SK-N-SH (cell line): ENCODE measurements at regions of chr20 and their contacts with region 1.

Region 1: DNA sequence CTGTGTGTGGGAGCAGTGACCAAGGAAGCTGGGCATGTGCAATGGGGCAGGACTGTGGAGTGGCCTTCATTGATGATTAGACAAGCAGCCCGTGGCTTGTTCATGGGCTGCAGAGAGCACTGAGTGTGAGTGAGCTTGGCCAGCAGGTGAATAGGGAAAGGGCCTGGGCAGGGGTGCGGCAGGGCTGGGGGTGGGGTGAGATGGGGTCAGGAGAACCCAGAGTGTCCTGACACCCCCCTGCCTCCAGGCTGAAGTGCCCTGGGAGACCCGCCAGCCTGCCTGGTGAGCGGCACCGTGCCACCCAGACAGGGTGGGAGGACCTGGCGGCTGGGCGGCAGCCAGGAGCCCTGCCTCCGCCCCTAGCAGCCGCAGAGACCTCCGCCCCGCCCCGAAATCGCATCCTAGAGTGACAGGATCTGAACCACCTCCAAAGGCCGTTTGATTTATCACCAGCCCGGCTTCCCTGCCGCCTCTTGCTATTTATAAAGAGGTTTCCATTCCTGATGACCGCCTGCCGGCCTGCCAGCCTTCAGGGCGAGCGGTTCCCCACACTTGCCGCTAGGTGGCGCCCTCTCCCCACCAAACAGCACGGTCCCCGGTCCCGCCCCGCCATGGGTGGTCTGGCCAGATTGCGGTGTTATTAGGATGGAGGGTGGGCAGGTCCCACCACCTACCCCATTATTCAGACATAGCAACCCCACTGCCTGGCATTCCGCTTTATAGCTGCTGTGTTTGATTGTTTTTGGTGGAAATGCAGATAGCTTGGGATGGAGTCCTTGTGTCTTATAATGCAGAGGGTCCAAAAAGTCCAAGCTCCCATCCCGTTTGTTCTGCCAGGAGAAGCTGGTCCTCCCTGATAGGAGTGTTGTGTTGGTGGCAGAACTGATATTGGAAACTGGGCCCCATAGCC is 3.5 kb downstream of the MYLK2 start:
- DNase-seq: peak; percentile 94
- H3K4me3 ChIP-seq: peak overlapping the region; percentile 41 to 70
- H3K27ac ChIP-seq: peak overlapping the region in 1 of 2 experiments; percentile 66; a peak in 2 of 4 replicates
- H3K4me1 ChIP-seq: peaks cover 0 to 8% of the 10 kb centered on the region in 2 experiments; a peak in 1 of 4 replicates
- H3K27me3 ChIP-seq: no peaks in the 10 kb centered on the region
- CTCF ChIP-seq: peak; percentile 98
- EP300 ChIP-seq: no peak
- RAD21 ChIP-seq: peak; percentile 96

Region 2: GRCh38 chr20:31560094-31560899 is 262.4 kb before region 1 on chr20:
- CTCF ChIA-PET with region 1: no interaction called
- POLR2A ChIA-PET with region 1: no interaction called
- DNase-seq: peak; percentile 68
- H3K4me3 ChIP-seq: peak overlapping the region in 1 of 2 experiments; percentile 54; a peak in 1 of 4 replicates
- H3K27ac ChIP-seq: peak overlapping the region; percentile 73 to 96
- H3K4me1 ChIP-seq: peaks cover 15 to 33% of the 10 kb centered on the region in 2 experiments
- H3K27me3 ChIP-seq: no peaks in the 10 kb centered on the region
- CTCF ChIP-seq: peak; percentile 98
- EP300 ChIP-seq: no peak
- RAD21 ChIP-seq: peak; percentile 55

Region 3: DNA sequence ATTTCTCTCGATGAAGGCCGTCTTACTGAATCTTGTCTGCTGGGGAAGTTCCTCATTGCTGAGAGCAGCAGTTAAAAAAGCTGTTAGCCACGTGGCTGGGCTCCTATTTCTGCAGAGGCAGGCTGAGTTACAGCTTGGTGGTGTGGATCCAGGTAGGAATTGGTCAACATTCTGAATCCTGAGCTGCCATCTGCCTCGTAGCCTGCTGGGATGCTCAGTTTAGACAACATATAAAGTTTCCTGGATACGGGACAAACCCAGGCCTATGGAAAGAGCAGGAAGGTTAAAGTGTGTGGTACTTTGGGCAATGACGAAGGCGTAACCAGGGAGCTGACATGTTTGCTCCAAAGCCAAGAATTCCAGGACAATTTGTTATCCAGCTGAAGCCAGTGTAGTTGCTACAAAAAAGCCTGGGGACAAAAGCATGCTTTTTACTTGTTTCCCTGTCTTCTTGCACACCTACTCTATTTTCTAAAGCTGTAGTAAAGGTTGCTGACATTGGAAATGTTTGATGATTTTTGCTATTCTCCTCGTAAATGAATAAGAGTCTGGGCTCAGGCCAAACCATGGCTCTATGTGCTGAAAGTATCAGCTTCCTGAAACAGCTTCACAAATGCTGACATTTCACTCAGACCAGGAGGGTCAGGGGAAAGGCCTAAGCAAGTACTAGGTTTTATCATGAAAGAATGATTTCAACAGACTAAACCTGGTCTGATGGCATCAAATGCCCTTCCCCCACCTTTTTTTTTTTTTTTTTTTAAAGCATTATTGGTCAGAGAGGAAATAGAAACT is 15.9 kb before region 1 on chr20:
- CTCF ChIA-PET with region 1: interaction called, 23 read pairs
- POLR2A ChIA-PET with region 1: no interaction called
- DNase-seq: no peak
- H3K4me3 ChIP-seq: no peak overlapping the region
- H3K27ac ChIP-seq: no peak overlapping the region
- H3K4me1 ChIP-seq: peaks cover 10 to 12% of the 10 kb centered on the region in 2 experiments; a peak in 3 of 4 replicates
- H3K27me3 ChIP-seq: no peaks in the 10 kb centered on the region
- CTCF ChIP-seq: no peak
- EP300 ChIP-seq: no peak
- RAD21 ChIP-seq: no peak

Region 4: GRCh38 chr20:31861346-31862156 is 38.9 kb after region 1 on chr20:
- CTCF ChIA-PET with region 1: interaction called, 16 read pairs
- POLR2A ChIA-PET with region 1: no interaction called
- DNase-seq: peak; percentile 99
- H3K4me3 ChIP-seq: peak overlapping the region; percentile 62 to 63
- H3K27ac ChIP-seq: peak overlapping the region in 1 of 2 experiments; percentile 82; a peak in 2 of 4 replicates
- H3K4me1 ChIP-seq: peaks cover 0 to 21% of the 10 kb centered on the region in 2 experiments; a peak in 2 of 4 replicates
- H3K27me3 ChIP-seq: no peaks in the 10 kb centered on the region
- CTCF ChIP-seq: no peak
- EP300 ChIP-seq: no peak
- RAD21 ChIP-seq: no peak

Region 5: DNA sequence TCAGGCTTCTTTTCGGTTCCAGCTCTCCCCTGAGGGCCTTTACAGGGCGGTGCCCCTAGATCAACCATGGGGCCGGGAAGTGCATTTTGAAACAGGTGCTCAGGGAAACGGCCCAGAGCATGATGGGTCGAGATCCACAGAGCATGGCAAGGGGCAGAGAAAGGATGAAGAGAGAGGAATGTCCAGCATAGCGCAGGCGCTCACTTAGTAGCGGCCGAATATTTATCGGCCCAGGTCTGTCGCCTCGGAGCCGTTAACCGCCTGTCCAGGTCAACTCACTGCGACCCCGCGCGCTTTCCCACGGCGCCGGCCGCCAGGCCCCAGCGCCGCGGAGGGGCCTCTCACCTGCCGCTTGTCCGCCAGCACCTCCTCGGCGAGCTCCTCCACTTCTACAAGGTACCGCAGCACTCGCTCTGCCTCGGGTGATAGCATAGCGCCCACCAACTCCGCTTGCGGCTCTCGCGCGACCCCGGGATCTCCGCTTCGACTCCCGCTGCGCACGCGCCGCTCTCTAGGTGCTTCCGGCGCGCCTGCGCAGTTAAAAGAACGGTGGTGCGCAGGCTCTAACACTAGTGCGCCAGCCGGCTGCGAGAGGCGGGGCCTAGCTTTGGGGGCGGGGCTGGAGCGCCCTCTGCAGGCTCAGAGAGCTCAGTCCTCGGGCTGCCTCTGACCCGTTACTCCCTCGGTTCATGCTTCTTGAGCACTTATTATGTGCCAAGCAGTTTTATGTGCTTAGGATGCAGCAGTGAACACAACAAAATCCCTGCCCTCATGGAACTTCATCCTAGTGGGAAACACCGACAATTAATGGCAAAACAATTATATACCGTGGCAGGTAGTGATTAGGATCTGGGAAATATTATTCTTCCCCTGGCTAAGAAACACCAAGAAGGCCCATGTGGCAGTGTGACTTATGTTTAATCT is 129.1 kb after region 1 on chr20 and contains the start of gene PDRG1:
- CTCF ChIA-PET with region 1: interaction called, 34 read pairs
- POLR2A ChIA-PET with region 1: no interaction called
- DNase-seq: peak; percentile 98
- H3K4me3 ChIP-seq: peak within 1 kb of the TSS; percentile 88 to 91
- H3K27ac ChIP-seq: peak within 1 kb of the TSS; percentile 40 to 75; a peak in 3 of 4 replicates
- H3K4me1 ChIP-seq: peaks cover 7 to 12% of the 10 kb centered on the region in 2 experiments; a peak in 3 of 4 replicates
- H3K27me3 ChIP-seq: no peaks in the 10 kb centered on the region
- CTCF ChIP-seq: peak; percentile 90
- EP300 ChIP-seq: no peak
- RAD21 ChIP-seq: peak; percentile 91
- polyA plus RNA-seq, gene PDRG1: 18.9 and 19.7 TPM in 2 replicates

Region 6: GRCh38 chr20:31979713-31980426 is 157.2 kb after region 1 on chr20:
- CTCF ChIA-PET with region 1: no interaction called
- POLR2A ChIA-PET with region 1: no interaction called
- DNase-seq: no peak
- H3K4me3 ChIP-seq: no peak overlapping the region
- H3K27ac ChIP-seq: no peak overlapping the region
- H3K4me1 ChIP-seq: no peaks in the 10 kb centered on the region; a peak in 1 of 4 replicates
- H3K27me3 ChIP-seq: no peaks in the 10 kb centered on the region; the same call in 1 of the 2 replicates
- CTCF ChIP-seq: no peak
- EP300 ChIP-seq: no peak
- RAD21 ChIP-seq: no peak

Region 7: DNA sequence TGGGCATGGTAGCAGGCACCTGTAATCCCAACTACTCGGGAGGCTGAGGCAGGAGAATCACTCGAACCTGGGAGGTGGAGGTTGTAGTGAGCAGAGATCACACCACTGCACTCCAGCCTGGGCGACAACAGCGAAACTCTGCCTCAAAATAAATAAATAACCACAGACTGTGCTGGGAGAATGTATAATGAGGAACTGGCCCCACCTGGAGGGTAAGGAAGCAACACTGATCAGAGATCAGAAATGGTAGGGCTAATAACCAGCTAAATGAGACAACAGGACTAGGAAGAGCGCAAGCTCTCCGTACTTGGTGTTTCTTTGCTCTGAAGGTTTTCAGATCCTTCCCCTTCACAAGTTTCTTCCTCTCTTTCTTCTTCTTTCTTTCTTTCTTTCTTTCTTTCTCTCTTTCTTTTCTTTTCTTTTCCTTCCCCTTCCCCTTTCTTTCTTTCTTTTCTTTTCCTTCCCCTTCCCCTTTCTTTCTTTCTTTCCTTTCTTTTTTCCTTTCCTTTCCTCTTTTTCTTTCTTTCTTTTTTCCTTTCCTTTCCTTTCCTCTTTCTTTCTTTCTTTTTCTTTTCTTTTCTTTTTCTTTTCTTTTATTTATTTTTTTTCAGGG is 202.1 kb after region 1 on chr20:
- CTCF ChIA-PET with region 1: interaction called, 120 read pairs
- POLR2A ChIA-PET with region 1: no interaction called
- DNase-seq: no peak
- H3K4me3 ChIP-seq: no peak overlapping the region
- H3K27ac ChIP-seq: no peak overlapping the region
- H3K4me1 ChIP-seq: peaks cover 0 to 6% of the 10 kb centered on the region in 2 experiments; a peak in 1 of 4 replicates
- H3K27me3 ChIP-seq: peaks cover 35% of the 10 kb centered on the region
- CTCF ChIP-seq: no peak
- EP300 ChIP-seq: no peak
- RAD21 ChIP-seq: no peak